Calu3 (cell line): ENCODE measurements at regions of chr1 and their contacts with region 1.

Region 1: GRCh38 chr1:110495926-110496600 is 22.9 kb downstream of the KCNA10 start:
- DNase-seq: peak; percentile 79
- H3K4me3 Mint-ChIP-seq: no peak overlapping the region
- H3K27ac Mint-ChIP-seq: no peak overlapping the region
- H3K4me1 Mint-ChIP-seq: no peaks in the 10 kb centered on the region
- H3K27me3 Mint-ChIP-seq: peaks cover 36% of the 10 kb centered on the region
- CTCF ChIP-seq: peak; percentile 79

Region 2: DNA sequence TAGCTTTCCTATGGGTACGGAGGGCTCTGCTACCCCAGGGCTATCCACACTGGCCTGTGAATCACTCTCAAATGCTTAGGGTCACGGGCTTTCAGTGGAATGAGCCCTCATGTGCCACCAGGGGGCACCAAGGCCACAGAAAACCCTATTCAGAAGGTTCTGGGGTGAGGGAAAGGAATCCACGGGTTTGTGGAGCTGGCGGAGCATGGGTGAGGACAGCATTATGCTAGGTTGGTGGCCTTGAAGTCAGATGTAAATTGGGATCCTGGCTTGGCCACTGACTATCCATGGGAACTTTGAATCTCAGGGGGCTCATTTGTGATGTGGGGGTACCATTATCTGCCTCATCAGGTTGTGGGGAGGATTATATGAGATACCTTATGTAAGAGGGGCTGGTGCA is 83.5 kb before region 1 on chr1:
- CTCF ChIA-PET with region 1: interaction called, 20 read pairs
- intact Hi-C with region 1: loop called (anchors 1 kb)
- DNase-seq: peak; percentile 72
- H3K4me3 Mint-ChIP-seq: no peak overlapping the region
- H3K27ac Mint-ChIP-seq: no peak overlapping the region
- H3K4me1 Mint-ChIP-seq: peaks cover 11% of the 10 kb centered on the region
- H3K27me3 Mint-ChIP-seq: peaks cover 28% of the 10 kb centered on the region
- CTCF ChIP-seq: peak; percentile 72

Region 3: GRCh38 chr1:110477041-110477440 is 19.0 kb before region 1 on chr1:
- CTCF ChIA-PET with region 1: interaction called, 13 read pairs
- intact Hi-C with region 1: no loop called
- DNase-seq: peak; percentile 8
- H3K4me3 Mint-ChIP-seq: peak overlapping the region; percentile 33
- H3K27ac Mint-ChIP-seq: peak overlapping the region; percentile 66
- H3K4me1 Mint-ChIP-seq: peaks cover 46% of the 10 kb centered on the region
- H3K27me3 Mint-ChIP-seq: no peaks in the 10 kb centered on the region
- CTCF ChIP-seq: no peak

Region 4: DNA sequence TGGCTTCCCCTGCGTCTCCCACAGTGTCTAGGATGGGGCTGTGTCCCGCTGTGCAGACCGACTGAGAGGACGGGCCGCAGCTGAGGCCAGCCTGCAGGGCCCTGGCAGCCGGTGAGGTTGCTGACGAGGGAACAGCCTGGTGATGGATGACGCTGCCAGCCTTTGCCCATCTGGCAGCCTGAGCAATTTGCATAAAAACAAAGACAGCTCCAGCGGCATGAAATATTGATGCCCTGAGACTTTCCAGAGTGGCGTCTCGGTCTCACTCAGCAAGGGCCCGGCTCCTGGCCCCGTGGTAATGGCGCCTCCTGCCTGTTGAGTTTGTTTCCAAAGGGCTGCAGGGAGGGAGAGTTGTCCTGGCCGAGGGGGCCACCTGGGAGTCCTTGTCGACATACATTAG is 42.0 kb after region 1 on chr1:
- CTCF ChIA-PET with region 1: no interaction called
- intact Hi-C with region 1: no loop called
- DNase-seq: no peak
- H3K4me3 Mint-ChIP-seq: no peak overlapping the region
- H3K27ac Mint-ChIP-seq: no peak overlapping the region
- H3K4me1 Mint-ChIP-seq: no peaks in the 10 kb centered on the region
- H3K27me3 Mint-ChIP-seq: peaks cover 82% of the 10 kb centered on the region
- CTCF ChIP-seq: no peak